Activated CD8-positive, alpha-beta T cell treated with anti-CD3 and anti-CD28 coated beads, Interleukin-2, amount 10 ng/mL, durations not matched to agents 7 days and 5 days (primary cell): ENCODE measurements at regions of chr11 and their contacts with region 1.

Region 1: GRCh38 chr11:1917671-1918516 is 1.6 kb upstream of the TNNT3 start:
- DNase-seq: no peak
- ATAC-seq: no peak
- H3K4me3 Mint-ChIP-seq: no peak overlapping the region
- H3K27ac Mint-ChIP-seq: no peak overlapping the region
- H3K4me1 Mint-ChIP-seq: peaks cover 18% of the 10 kb centered on the region
- H3K27me3 Mint-ChIP-seq: peaks cover 8% of the 10 kb centered on the region

Region 2: DNA sequence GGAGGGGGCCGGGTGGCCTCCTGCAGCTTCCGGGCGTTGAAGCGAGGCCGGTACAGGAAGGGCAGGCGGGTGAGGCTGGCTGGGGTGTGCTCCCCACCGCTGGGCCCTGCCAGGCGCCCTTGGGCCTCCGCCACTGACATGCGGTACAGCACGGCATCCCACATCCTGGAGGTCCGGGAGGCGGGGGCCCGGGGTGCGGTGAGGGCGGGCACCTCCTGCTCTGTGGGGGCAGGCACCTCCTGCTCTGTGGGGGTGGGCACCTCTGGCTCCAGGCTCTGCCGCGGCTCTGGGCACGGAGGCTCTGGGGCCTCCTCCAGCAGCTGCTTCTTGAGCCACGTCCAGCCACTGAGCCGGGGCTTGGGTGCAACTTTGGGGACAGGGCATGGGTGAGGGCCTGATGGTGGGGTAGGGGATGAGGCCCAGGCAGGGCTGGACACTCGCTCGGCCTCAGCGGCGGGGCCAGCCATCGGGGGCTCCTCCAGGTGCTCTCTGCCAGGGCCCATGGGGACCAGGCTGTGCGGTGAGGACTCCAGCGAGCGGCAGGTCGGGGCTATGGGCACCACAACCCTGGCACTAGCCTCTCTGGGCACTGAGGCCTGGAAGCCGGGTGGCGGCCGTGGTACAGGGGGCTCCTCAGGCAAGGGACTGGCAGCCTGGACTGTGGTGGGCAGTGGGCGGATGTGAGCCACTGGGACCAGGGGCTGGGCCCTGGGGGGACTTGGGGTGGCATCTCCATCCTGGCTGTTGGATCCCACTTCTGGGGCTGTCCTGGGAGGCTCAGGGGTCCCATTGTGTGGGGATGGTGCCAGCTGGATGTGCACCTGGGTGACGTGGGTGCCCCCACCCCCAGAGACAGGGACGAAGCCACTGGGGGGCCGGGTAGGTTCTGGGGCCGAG is 28.4 kb before region 1 on chr11:
- CTCF ChIA-PET with region 1: interaction called, 4 read pairs
- POLR2A ChIA-PET with region 1: interaction called, 46 read pairs
- DNase-seq: peak; percentile 91
- ATAC-seq: peak; percentile 75
- H3K4me3 Mint-ChIP-seq: peak overlapping the region; percentile 70
- H3K27ac Mint-ChIP-seq: peak overlapping the region; percentile 88
- H3K4me1 Mint-ChIP-seq: peaks cover 54% of the 10 kb centered on the region
- H3K27me3 Mint-ChIP-seq: no peaks in the 10 kb centered on the region

Region 3: DNA sequence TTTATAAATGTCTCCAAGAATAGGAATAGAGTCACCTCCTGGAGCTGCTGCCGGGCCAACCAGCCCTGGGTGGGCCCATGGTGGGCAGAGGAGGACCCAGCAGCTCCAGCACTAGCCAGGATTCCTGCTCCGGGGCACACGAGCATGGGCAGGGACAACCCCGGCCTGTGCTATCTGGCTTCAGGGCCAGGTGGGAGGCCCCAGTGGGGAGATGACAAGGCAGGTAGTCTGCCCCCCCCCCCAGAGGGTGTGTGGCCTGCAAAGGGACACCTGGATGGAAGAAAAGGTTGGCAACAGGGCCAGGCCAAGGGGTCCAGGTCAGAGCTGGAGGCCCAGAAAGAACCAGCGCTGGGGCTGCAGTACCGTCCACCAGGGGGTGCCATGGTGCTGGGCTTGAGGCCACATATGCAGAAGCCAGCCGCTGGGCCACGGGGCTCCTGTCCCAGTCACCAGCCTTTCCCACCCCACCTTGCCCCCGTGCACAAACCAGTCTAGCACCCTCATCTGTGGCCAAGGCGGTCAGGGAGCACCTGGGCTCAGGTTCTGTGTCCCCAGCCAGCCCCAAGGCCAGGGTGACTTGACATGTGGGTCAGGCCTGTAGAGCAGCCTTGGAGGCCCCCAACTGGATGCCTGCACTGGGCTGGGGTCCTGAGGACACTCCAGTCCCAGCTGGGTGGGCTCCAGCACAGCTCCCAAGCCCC is 387.4 kb after region 1 on chr11:
- CTCF ChIA-PET with region 1: no interaction called
- POLR2A ChIA-PET with region 1: no interaction called
- DNase-seq: peak; percentile 89
- ATAC-seq: peak; percentile 62
- H3K4me3 Mint-ChIP-seq: peak overlapping the region; percentile 94
- H3K27ac Mint-ChIP-seq: peak overlapping the region; percentile 89
- H3K4me1 Mint-ChIP-seq: peaks cover 55% of the 10 kb centered on the region
- H3K27me3 Mint-ChIP-seq: no peaks in the 10 kb centered on the region